ENCODE measurements at regions of chr3 and their contacts with region 1.

Region 1: GRCh38 chr3:50542177-50543034 is 25.1 kb downstream of the C3orf18 start:
- DNase-seq: peak; percentile 51 to 90 (median 70)
- H3K4me3 ChIP-seq: no peak overlapping the region
- H3K27ac ChIP-seq: no peak overlapping the region
- H3K4me1 ChIP-seq: no peaks in the 10 kb centered on the region
- H3K27me3 ChIP-seq: no peaks in the 10 kb centered on the region
- CTCF ChIP-seq: peak; percentile 76 to 92 (median 84)
- POLR2A ChIP-seq: no peak

Region 2: DNA sequence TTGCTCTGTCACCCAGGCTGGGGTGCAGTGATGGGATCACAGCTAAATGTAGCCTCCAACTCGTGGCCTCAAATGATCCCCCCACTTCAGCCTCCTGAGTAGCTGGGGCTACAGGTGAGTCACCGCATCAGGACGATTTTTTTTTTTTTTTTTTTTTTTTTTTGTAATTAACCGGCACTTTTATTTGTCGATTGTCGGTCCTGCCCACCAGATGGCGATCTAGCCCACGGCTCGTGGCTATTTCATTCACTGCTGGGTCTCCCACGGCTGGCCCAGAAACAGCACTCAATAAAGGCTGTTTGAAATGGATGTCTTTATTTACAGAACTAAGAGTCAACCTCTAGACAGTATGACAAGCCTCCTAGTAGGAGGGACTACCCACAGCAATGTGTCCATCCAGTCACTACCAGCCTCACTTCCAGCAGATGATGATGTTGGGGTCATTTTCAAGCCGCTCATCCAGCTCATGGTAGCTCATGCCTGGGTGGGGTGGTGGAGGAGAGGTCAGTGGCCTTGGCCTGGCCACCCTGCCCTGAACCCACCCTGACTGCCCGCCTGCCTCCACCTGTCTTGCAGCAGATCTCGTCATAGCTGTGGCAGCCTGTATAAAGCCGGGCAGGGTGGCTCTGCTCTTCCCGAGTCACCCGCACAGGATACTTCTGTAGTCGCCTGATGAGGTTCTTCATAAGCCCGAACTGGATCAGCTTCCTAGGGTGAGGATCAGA is 195.1 kb before region 1 on chr3:
- intact Hi-C with region 1: loop called (anchors 2 to 5 kb)
- DNase-seq: peak; percentile 69 to 90 (median 81)
- H3K4me3 ChIP-seq: no peak overlapping the region
- H3K27ac ChIP-seq: peak overlapping the region in 2 of 5 donors; percentile 13 to 27
- H3K4me1 ChIP-seq: peaks cover 26 to 34% of the 10 kb centered on the region in 2 donors
- H3K27me3 ChIP-seq: no peaks in the 10 kb centered on the region
- CTCF ChIP-seq: peak; percentile 33 to 67 (median 60)
- POLR2A ChIP-seq: no peak

Region 3: GRCh38 chr3:50436114-50436674 is 106.2 kb before region 1 on chr3:
- intact Hi-C with region 1: loop called (anchors 5 kb)
- DNase-seq: peak; percentile 46 to 73 (median 54)
- H3K4me3 ChIP-seq: no peak overlapping the region
- H3K27ac ChIP-seq: no peak overlapping the region
- H3K4me1 ChIP-seq: no peaks in the 10 kb centered on the region
- H3K27me3 ChIP-seq: no peaks in the 10 kb centered on the region
- CTCF ChIP-seq: peak; percentile 50 to 72 (median 65)
- POLR2A ChIP-seq: no peak